Right ventricle myocardium inferior (tissue), 1 donor: ENCODE measurements at regions of chr15 and their contacts with region 1.

Region 1: DNA sequence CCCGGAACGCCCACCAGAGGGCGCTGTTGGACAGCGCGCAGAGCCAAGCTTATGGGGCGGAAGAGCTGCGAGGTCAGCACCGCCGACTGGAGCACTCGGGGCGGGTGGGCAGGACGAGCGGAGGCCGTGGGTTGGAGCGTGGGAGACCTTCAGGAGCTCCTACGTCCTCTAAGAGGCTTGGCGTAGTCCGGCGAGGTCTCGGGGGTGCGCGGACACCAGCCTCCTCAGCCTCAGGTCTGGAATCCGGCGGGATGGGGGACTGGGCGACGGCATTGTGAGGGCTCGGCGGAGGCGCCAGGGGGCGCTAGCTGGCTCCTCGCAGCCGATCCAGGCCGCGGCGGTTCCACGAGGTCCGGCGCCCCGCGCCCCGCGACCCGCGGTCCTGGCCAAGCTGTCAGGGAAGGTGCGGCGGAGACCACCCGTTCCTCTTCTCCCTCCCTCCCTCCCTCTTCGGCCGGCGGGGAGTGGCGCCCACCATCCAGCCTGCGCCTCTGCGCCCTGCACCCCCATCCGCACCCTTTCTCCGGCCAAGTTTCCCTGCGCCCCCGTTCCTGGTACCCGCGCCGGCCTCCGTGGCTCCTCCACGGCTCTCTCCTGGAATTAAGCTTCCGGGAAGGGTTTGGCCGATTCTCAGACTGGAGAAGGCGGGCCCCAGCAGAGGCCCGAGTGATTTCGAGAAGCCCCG is 24.3 kb upstream of the POLG start:
- DNase-seq: peak; percentile 90
- ATAC-seq: peak; percentile 90

Region 2: GRCh38 chr15:89430530-89431341 is 71.8 kb after region 1 on chr15:
- intact Hi-C with region 1: loop called (anchors 1 kb)
- DNase-seq: peak; percentile 91
- ATAC-seq: peak; percentile 91

Region 3: DNA sequence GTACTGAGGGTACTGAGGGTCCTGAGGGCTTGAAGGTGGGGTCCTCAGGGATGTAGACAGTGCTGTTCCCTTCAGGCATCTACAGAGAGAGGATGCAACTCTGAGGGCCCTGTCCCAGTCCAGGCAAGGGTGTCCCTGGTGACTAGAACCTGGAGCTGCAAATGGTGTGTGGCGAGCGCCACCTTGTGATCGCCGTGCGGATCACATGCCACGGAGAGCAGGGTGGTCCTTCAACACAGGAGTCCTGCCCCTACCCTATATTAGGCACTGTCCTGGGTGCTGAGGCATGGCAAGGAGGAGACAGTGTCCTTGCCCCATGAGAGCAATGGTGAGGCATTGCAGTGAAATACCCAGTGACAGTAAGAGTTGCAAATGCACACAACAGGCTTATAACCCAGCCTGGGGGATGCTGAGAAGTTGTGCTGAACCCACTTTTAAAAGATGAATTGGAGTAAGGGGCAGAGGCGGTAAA is 113.9 kb after region 1 on chr15:
- intact Hi-C with region 1: loop called (anchors 5 kb)
- DNase-seq: no peak
- ATAC-seq: peak; percentile 20

Region 4: DNA sequence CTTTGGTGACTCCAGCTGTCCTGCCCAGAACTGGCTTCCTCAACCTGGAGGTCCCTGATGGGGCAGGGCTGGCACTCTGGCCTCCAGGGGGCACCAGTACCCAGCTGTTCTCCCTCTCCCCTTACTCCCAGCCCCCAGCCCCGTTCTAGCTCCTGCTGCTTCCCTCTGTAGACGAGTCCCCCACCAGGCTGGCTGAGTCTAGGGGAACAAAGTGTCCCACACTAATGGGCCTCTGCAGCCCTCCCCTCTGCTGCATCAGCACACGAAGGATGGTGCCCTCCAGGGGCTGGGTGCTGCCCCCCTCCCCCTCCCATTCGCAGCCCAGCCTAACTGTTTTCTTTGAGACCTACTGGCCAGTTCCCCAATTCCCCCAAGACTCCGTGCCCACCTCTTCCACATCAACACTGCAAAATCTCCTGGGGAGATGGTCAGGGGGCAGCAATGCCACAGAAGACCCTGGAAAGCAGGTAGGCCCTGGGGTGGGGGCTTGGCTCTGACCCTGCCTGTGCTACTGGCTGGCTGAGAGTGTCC is 133.3 kb after region 1 on chr15:
- intact Hi-C with region 1: no loop called
- DNase-seq: no peak
- ATAC-seq: no peak

Region 5: DNA sequence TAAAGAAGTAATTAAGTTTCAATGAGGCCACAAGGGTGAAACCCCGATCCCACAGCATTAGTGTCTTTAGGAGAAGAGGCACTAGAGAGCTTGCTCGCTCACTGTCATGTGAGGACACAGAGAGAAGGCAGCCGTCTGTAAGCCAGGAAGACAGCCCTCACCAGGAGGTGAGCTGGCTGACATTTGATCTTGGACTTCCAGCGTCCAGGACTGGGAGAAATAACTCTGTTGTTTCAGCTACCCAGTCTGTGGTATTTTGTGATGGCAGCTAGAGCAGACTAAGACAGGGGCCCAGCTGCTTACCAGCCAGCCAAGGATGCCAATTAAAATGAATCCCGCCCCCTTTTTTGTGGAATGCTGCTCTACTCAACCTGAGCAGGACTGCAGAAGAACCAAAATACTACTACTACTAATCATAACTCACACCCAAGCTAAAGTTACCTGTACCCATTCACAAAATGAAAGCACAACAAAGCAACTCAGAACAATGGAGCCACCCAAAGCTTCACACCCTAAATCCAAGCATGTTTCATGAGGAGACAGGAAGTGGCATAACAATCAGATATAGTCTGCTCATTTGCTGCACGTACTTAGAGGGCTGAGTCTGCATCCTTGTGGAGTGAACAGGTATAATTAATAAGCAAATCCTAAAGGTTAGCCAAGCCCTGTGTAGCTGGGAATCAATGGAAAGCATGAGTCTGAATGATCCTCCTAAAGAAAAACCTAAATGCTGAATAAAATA is 173.1 kb after region 1 on chr15:
- intact Hi-C with region 1: no loop called
- DNase-seq: no peak
- ATAC-seq: no peak

Region 6: DNA sequence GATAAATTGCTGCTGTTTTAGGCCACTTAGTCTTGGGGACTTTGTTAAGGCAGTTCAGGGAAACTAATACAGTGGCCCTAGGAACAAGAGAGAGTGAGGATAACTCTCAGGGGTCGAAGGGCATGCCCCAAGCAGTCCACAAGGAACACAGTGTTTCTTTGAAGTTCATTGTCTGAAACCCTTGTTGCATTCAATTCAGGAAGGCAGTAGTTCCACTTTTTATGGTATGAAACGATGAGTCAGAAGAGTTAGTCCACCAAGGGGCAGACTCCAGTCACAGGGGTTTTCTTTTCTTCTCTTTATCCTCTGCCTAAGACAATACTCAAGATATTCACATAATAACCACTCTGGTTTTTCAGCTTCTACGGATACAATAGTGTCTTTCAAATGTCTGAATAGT is 192.6 kb after region 1 on chr15:
- intact Hi-C with region 1: loop called (anchors 5 kb)
- DNase-seq: no peak
- ATAC-seq: no peak

Region 7: DNA sequence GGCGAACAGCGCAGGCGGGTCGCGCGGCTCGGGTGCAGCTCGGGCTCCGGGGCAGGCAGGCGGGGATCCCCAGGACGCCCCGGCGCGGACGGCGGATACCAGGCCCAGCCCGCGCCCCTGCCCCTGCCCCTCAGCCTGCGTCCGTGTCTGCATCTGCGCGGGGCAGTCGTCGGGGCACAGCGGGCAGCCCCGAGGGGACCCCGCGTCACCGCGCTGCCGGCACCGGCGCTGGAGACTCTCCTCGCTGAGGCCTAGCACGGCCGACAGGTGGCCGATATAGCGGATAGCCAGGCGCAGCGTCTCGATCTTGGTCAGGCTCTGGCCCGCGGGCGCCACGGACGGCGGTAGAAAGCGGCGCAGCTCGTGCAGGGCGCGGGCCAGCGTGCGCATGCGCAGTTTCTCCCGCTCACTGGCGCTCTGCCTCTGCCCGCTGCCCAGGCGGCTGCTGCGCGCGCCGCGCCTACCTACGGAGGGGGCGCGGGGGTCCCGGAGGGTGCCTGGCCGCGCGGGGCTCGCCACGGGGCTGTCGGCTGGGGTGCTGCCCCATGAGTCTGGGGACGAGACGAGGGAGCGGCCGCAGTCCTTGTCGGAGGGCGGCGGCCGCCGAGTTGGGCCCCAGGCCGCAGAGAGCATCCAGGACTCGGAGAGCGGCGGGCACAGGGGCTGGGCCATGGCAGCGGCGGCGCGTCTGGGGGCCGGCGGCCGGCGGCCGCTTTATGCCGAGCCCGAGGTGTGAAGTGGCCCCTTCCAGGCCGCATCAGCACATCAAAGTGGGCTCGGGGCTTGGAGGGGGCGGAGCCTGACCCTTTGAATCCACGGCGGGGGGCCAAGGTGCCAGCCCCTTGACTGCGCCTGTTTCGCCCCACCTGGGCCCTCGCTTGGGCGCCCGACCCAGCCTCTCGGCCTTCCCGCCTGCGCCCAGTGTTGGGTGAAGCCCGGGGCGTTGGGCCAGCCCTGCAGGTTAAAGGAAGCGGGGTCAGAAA is 392.0 kb after region 1 on chr15 and contains the start of gene MESP1:
- intact Hi-C with region 1: no loop called
- DNase-seq: peak; percentile 98
- ATAC-seq: peak; percentile 95
- total RNA-seq, gene MESP1: 7.4 TPM